ENCODE measurements at regions of chr17 and their contacts with region 1.

Region 1: GRCh38 chr17:75271233-75271954 is 363 bp upstream of the MIF4GD start:
- DNase-seq: peak; percentile 93
- ATAC-seq: peak; percentile 79
- H3K4me3 Mint-ChIP-seq: peak overlapping the region; percentile 80
- H3K27ac Mint-ChIP-seq: peak overlapping the region; percentile 81
- H3K4me1 Mint-ChIP-seq: peaks cover 21% of the 10 kb centered on the region
- H3K27me3 Mint-ChIP-seq: no peaks in the 10 kb centered on the region

Region 2: DNA sequence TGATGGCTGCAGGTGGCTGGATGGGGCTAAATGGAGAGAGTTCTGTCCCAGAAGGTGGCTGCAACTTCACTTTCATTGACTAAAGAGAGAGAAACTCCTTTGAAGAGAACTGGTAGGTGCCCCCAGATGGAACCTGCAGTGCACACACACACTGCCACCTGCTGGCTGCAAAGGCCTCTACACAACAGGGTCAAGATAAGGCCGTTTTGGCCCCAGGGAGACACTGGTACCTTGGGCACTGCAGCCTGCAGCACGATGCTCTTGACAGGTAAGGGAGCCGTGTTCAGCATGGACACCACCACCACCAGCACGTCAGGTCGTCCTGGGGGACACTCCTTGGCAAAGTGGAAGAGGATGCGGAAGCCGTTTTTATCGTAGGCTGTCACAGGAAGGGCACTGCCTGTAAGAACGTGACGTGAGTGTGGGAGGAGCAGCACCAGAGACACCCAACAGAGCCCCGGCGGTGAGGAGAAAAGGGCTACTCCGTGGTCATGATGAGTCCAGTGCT is 32.7 kb before region 1 on chr17:
- CTCF ChIA-PET with region 1: interaction called, 15 read pairs
- POLR2A ChIA-PET with region 1: interaction called, 13 read pairs
- intact Hi-C with region 1: loop called (anchors 1 to 5 kb)
- DNase-seq: peak; percentile 79
- ATAC-seq: peak; percentile 71
- H3K4me3 Mint-ChIP-seq: no peak overlapping the region
- H3K27ac Mint-ChIP-seq: peak overlapping the region; percentile 87
- H3K4me1 Mint-ChIP-seq: peaks cover 37% of the 10 kb centered on the region
- H3K27me3 Mint-ChIP-seq: no peaks in the 10 kb centered on the region

Region 3: GRCh38 chr17:75250009-75250471 is 21.4 kb before region 1 on chr17:
- CTCF ChIA-PET with region 1: interaction called, 29 read pairs
- POLR2A ChIA-PET with region 1: interaction called, 8 read pairs
- intact Hi-C with region 1: loop called in 1 of 2 experiments (anchors 1 kb)
- DNase-seq: peak; percentile 90
- ATAC-seq: peak; percentile 97
- H3K4me3 Mint-ChIP-seq: peak overlapping the region; percentile 64
- H3K27ac Mint-ChIP-seq: peak overlapping the region; percentile 97
- H3K4me1 Mint-ChIP-seq: peaks cover 74% of the 10 kb centered on the region
- H3K27me3 Mint-ChIP-seq: no peaks in the 10 kb centered on the region

Region 4: DNA sequence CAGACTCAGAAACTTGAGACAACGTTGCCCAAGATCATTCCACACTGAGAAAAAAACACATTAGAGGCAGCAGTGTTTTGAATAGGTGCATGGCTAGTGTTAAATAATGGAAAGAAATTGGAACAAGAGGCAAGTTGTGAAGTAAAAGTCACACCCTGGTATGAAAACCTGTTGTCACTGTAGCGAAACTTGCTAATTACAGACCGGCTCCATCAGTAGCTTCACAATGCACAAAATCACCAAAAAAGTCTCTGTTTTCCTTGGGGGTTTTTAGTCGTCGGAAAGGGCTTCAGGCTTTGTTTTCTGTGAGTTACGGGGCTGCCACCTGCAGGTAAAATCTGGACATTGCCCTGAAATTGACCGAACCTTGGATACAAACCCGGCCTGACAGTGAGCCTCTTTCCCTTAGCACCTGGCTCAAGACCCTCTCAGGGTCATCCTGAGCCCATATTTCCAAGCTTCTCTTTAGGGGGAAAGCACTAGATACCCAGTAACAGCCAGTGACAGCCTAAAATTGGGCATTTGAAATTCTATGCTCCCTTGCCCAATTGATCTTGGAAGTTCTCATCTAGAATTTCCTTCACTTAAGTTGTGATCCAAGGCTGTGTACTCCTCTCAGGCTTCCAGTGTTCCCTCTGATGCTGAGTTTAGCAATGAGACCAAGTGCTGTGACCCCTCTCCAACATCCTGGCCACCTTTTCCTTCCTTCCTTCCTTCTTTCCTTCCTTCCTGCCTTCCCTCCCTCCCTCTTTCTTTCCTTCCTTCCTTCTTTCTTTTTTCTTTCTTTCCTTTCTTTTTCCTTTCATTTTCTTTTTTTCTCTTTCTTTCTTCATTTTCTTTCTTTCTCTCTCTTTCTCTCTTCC is 141.3 kb after region 1 on chr17:
- CTCF ChIA-PET with region 1: interaction called, 17 read pairs
- POLR2A ChIA-PET with region 1: no interaction called
- intact Hi-C with region 1: loop called in 1 of 2 experiments (anchors 1 kb)
- DNase-seq: peak; percentile 84
- ATAC-seq: peak; percentile 85
- H3K4me3 Mint-ChIP-seq: peak overlapping the region; percentile 44
- H3K27ac Mint-ChIP-seq: peak overlapping the region; percentile 3
- H3K4me1 Mint-ChIP-seq: peaks cover 15% of the 10 kb centered on the region
- H3K27me3 Mint-ChIP-seq: no peaks in the 10 kb centered on the region

Region 5: DNA sequence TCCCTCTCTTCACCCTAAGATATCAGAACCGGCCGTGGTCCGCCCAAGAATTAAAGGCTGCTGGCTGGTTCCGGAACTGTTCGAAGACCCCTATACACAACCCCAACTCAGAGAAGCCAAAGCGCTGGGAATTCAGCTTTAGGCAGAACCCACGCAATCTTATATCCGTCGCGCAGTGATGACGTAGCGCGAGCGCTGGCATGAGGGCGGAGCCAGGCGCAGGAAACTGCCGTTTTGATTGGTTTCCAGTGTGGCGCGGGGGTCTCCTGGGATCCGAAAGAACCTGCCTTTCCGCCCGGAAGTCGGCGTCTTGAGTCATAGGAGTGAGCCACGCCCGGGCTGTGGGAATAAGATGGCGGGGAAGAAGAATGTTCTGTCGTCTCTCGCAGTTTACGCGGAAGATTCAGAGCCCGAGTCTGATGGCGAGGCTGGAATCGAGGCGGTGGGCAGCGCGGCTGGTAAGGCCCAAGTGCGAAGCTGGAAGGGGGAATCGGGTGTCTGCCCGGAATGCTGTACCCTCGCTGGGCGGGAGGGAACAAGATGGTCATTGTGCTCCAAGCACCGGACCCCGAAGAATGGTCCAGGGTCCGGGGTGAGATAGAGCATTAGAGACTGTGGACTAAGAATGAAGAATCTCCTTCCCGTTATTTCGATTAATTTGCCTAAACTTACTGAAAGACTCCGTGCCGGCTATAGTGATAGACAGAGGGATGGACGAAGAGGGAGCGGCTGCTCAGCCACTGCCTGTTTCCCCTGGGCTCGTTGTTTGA is 395.8 kb after region 1 on chr17 and contains the starts of genes RECQL5 and SAP30BP:
- CTCF ChIA-PET with region 1: no interaction called
- POLR2A ChIA-PET with region 1: no interaction called
- intact Hi-C with region 1: loop called in 1 of 2 experiments (anchors 1 kb)
- DNase-seq: peak; percentile 99
- ATAC-seq: peak; percentile 100
- H3K4me3 Mint-ChIP-seq: no peak within 1 kb of the TSS
- H3K27ac Mint-ChIP-seq: no peak within 1 kb of the TSS
- H3K4me1 Mint-ChIP-seq: peaks cover 34% of the 10 kb centered on the region
- H3K27me3 Mint-ChIP-seq: no peaks in the 10 kb centered on the region
- total RNA-seq, gene RECQL5: 36.4 to 40.5 TPM
- total RNA-seq, gene SAP30BP: 87.8 to 100.0 TPM